ENCODE measurements at regions of chr3 and their contacts with region 1.

Region 1: GRCh38 chr3:124887177-124887931 is at the start of gene ITGB5:
- DNase-seq: peak; percentile 91
- total RNA-seq, gene ITGB5: 361 and 475 TPM in 2 replicates

Region 2: DNA sequence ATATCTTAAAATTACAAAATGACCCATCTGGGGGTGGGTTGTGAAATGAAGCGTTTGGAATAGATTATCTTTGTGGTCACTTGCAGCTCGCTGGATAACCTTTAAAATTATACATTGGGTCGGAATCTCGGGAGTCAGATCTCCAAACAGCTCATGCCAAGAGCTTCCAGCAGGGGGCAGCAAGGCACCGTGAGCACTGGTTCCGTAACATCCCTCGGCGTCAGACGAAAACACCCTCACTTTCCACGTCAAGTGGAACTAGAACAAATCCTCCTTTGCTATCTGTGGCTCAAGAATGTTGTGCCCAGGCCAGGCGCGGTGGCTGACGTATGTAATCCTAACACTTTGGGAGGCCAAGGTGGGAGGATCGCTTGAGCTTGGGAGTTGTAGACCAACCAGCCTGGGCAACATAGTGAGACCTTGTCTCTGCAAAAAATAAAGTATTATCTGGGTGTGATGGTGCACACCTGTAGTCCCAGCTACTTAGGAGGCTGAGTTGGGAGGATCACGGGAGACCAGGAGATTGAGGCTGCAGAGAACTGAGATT is 126.0 kb before region 1 on chr3:
- in situ Hi-C with region 1: loop called (anchors 25 kb)
- DNase-seq: peak; percentile 61